ENCODE measurements at regions of chr2 and their contacts with region 1.

Region 1: GRCh38 chr2:88055371-88056128 is at the start of gene KRCC1:
- DNase-seq: peak; percentile 97 to 99 (median 98)
- H3K4me3 ChIP-seq: peak within 1 kb of the TSS; percentile 83 to 94 (median 87)
- H3K4me3 Mint-ChIP-seq: peak within 1 kb of the TSS; percentile 96 to 97
- H3K27ac ChIP-seq: peak within 1 kb of the TSS; percentile 81 to 99
- H3K27ac Mint-ChIP-seq: peak within 1 kb of the TSS; percentile 94 to 99 (median 97)
- H3K4me1 ChIP-seq: peaks cover 25 to 29% of the 10 kb centered on the region in 2 donors
- H3K4me1 Mint-ChIP-seq: peaks cover 43% of the 10 kb centered on the region
- H3K27me3 ChIP-seq: no peaks in the 10 kb centered on the region
- H3K27me3 Mint-ChIP-seq: no peaks in the 10 kb centered on the region
- CTCF ChIP-seq: no peak
- polyA plus RNA-seq, gene KRCC1: 10.8 to 31.6 (median 24.7) TPM

Region 2: DNA sequence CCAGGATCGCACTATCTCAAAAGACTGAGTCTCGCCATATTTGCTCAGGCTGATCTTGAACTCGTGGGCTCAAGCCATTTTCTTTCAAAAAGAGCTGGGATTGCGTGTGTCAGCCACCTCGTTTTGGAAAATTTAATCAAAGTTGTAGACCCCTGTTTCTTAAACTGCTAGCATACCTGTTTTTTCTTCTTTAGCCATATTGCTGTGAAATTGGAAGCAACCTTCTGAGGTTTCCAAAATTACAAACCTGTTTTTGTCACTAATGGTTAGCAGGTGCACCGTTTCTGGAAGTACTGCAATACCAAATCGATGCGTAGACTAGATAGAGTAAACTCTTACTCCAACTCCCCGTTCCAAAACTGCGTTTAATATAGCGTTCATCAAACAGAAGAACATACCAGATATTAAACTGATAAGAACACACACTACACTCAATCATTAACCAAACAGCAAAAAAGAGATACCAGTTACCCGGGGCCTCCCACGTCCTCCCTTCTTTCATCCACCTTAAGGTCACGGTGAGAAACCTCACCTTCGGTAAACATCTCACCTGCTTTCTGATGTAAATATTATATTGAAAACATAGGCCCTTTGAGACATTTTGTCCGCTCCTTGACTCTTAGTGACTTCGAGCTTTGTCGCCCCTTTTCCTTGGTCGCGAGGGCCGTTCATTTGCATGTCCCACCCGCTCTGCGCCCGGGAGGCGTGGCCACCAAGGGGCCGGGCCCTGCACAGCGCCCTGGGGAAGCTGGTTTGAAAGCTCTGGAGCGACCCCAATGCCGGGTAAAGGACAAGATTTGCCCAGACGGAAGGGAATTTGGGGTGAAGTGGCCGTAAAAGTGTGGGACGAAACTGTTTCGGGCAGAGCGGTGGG is 39.2 kb before region 1 on chr2 and contains the start of gene RNU2-63P:
- intact Hi-C with region 1: loop called in 1 of 2 experiments (anchors 5 kb)
- DNase-seq: peak; percentile 37 to 62 (median 60)
- H3K4me3 ChIP-seq: peak within 1 kb of the TSS; percentile 53 to 84 (median 72)
- H3K4me3 Mint-ChIP-seq: peak within 1 kb of the TSS; percentile 96 to 99
- H3K27ac ChIP-seq: peak within 1 kb of the TSS in 1 of 2 donors; percentile 60
- H3K27ac Mint-ChIP-seq: peak within 1 kb of the TSS; percentile 79 to 97 (median 92)
- H3K4me1 ChIP-seq: peaks cover 10 to 13% of the 10 kb centered on the region in 2 donors
- H3K4me1 Mint-ChIP-seq: peaks cover 18% of the 10 kb centered on the region
- H3K27me3 ChIP-seq: peaks cover 0 to 2% of the 10 kb centered on the region in 2 donors
- H3K27me3 Mint-ChIP-seq: peaks cover 0 to 9% (median 8%) of the 10 kb centered on the region in 3 donors
- CTCF ChIP-seq: no peak
- polyA plus RNA-seq, gene RNU2-63P: 7.5 to 8.0 TPM in 2 of 3 donors, not detected in the other

Region 3: DNA sequence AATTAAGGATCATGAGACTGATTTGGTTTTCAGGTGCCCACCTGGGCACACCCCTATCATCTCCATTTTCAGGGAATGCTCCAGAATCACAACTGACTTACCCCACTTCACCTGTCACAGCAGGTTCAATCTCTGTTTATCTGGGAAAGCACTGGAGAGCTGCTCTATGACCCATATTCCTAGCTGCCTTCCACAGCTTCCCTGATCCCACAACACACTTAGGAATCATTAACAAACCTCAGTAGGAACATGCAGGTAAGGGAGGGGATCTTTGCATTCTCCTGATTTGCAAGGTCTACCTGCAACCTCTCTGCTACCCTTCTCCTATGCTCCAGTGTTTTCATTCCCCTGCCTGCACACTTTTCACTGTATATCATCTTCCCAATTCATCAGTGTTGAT is 91.0 kb after region 1 on chr2:
- intact Hi-C with region 1: no loop called
- DNase-seq: no peak
- H3K4me3 ChIP-seq: no peak overlapping the region
- H3K4me3 Mint-ChIP-seq: no peak overlapping the region
- H3K27ac ChIP-seq: no peak overlapping the region
- H3K27ac Mint-ChIP-seq: no peak overlapping the region
- H3K4me1 ChIP-seq: no peaks in the 10 kb centered on the region
- H3K4me1 Mint-ChIP-seq: no peaks in the 10 kb centered on the region
- H3K27me3 ChIP-seq: no peaks in the 10 kb centered on the region
- H3K27me3 Mint-ChIP-seq: peaks cover 1 to 6% (median 4%) of the 10 kb centered on the region in 3 donors
- CTCF ChIP-seq: no peak

Region 4: GRCh38 chr2:88159955-88160415 is 104.4 kb after region 1 on chr2:
- intact Hi-C with region 1: loop called in 1 of 2 experiments (anchors 2 kb)
- DNase-seq: peak; percentile 33 to 67 (median 53)
- H3K4me3 ChIP-seq: no peak overlapping the region
- H3K4me3 Mint-ChIP-seq: no peak overlapping the region
- H3K27ac ChIP-seq: no peak overlapping the region
- H3K27ac Mint-ChIP-seq: no peak overlapping the region
- H3K4me1 ChIP-seq: no peaks in the 10 kb centered on the region
- H3K4me1 Mint-ChIP-seq: no peaks in the 10 kb centered on the region
- H3K27me3 ChIP-seq: no peaks in the 10 kb centered on the region
- H3K27me3 Mint-ChIP-seq: peaks cover 0 to 1% (median 0%) of the 10 kb centered on the region in 3 donors
- CTCF ChIP-seq: peak; percentile 87